Adrenal gland (tissue), 19 donors: ENCODE measurements at regions of chr10 and their contacts with region 1.

Region 1: GRCh38 chr10:36703179-36703578 is 422.2 kb upstream of the ANKRD30A start:
- DNase-seq: no peak
- H3K4me3 ChIP-seq: no peak overlapping the region
- H3K27ac ChIP-seq: no peak overlapping the region
- H3K4me1 ChIP-seq: no peaks in the 10 kb centered on the region
- H3K27me3 ChIP-seq: no peaks in the 10 kb centered on the region
- CTCF ChIP-seq: no peak
- POLR2A ChIP-seq: no peak

Region 2: GRCh38 chr10:36581237-36581636 is 121.9 kb before region 1 on chr10:
- intact Hi-C with region 1: no loop called
- DNase-seq: no peak
- H3K4me3 ChIP-seq: no peak overlapping the region
- H3K27ac ChIP-seq: no peak overlapping the region
- H3K4me1 ChIP-seq: no peaks in the 10 kb centered on the region
- H3K27me3 ChIP-seq: no peaks in the 10 kb centered on the region
- CTCF ChIP-seq: no peak
- POLR2A ChIP-seq: no peak

Region 3: GRCh38 chr10:36647540-36647939 is 55.6 kb before region 1 on chr10:
- intact Hi-C with region 1: loop called in 1 of 2 experiments (anchors 5 kb)
- DNase-seq: no peak
- H3K4me3 ChIP-seq: no peak overlapping the region
- H3K27ac ChIP-seq: no peak overlapping the region
- H3K4me1 ChIP-seq: no peaks in the 10 kb centered on the region
- H3K27me3 ChIP-seq: no peaks in the 10 kb centered on the region
- CTCF ChIP-seq: no peak
- POLR2A ChIP-seq: no peak